ENCODE measurements at regions of chr5 and their contacts with region 1.

Region 1: DNA sequence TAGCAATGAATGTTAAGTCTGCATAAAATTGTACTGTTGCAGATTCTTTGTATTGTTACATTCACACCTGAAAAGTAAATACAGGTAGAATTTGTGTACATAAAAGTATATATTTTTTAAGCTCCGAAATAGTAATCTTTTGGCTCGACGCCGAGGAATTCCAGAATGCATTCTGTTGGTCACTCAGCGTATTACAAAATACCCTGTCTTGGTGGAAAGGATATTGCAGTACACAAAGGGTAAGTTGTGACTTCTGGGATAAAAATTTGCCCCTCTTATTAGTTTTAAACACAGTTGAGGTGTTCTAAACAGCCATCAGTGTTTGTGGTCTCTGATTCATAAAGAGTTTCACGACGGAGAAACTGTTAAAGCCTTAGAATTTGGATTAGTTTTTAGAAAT is 257.6 kb downstream of the ARHGEF28 start:
- DNase-seq: no peak
- H3K4me3 ChIP-seq: no peak overlapping the region
- H3K27ac ChIP-seq: no peak overlapping the region
- H3K4me1 ChIP-seq: no peaks in the 10 kb centered on the region
- H3K27me3 ChIP-seq: no peaks in the 10 kb centered on the region
- CTCF ChIP-seq: no peak
- POLR2A ChIP-seq: no peak

Region 2: GRCh38 chr5:73853091-73853490 is 30.6 kb before region 1 on chr5:
- intact Hi-C with region 1: no loop called
- DNase-seq: no peak
- H3K4me3 ChIP-seq: no peak overlapping the region
- H3K27ac ChIP-seq: peak overlapping the region; percentile 40
- H3K4me1 ChIP-seq: peaks cover 10% of the 10 kb centered on the region
- H3K27me3 ChIP-seq: no peaks in the 10 kb centered on the region
- CTCF ChIP-seq: no peak
- POLR2A ChIP-seq: no peak

Region 3: DNA sequence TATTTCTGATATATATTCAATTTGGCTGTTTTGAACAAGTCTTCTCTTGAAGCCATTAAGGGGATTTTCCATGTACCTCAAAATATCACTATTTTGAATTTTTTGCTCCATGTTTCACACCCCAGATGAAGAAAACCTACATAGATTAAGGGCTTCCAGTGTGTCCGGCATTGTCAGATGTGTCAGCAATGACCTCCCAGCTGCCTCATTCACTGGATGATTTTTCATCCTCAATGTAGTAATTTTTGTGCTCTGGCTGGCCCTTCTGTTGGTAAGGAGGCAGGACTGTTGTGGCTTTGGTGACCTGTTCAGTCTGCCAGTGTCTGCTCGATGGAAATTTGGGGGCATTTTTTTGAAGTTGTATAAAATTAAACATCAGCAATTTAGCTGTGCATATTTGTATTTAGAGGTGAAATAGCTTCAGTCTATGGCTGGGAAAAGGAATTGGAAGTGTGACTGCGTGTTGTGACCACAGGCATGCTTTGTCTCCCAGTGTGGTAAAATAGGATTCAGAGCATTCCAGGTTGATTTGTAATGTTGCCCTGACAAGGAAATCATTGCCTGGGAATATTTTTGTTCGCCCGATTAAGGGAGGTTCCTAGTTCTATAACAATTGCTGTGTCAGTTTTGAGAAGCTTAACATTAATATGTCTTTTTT is 54.8 kb after region 1 on chr5:
- intact Hi-C with region 1: no loop called
- DNase-seq: no peak
- H3K4me3 ChIP-seq: no peak overlapping the region
- H3K27ac ChIP-seq: no peak overlapping the region
- H3K4me1 ChIP-seq: peaks cover 6% of the 10 kb centered on the region
- H3K27me3 ChIP-seq: no peaks in the 10 kb centered on the region
- CTCF ChIP-seq: no peak
- POLR2A ChIP-seq: no peak

Region 4: DNA sequence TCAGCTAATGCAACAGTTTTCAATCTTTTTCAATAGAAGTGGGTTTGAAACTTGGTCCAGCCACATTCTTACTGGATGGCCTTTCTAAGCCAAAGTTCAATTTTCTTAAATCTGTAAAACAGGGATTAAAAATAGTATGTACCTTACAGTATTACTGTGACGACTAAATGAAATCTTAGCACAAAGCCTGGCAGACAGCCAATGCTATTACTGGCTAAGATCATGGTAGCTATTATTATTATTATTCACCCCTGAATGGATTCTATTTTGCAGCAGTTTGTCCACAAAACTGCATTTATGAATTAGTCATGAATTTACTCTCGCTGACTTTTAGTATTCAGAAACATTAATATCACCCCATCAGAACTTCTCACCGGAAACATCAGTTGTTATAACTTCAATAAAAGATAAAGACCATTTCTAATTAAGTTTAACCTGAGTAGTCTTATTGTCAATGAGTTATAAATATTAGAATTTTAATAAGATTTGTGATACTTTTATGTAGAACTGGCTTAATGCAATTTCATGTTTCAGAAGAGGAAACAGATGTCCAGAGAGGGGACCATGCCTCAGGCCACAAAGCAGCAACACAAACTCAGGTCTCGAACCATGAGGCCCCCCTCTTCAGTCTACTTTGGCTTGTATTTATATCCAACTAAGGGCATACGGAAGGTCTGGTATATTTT is 210.6 kb after region 1 on chr5:
- intact Hi-C with region 1: no loop called
- DNase-seq: no peak
- H3K4me3 ChIP-seq: no peak overlapping the region
- H3K27ac ChIP-seq: no peak overlapping the region
- H3K4me1 ChIP-seq: peaks cover 9% of the 10 kb centered on the region
- H3K27me3 ChIP-seq: no peaks in the 10 kb centered on the region
- CTCF ChIP-seq: no peak
- POLR2A ChIP-seq: no peak

Region 5: GRCh38 chr5:75067434-75067833 is 1183.8 kb after region 1 on chr5:
- intact Hi-C with region 1: loop called (anchors 5 kb)
- DNase-seq: no peak
- H3K4me3 ChIP-seq: no peak overlapping the region
- H3K27ac ChIP-seq: no peak overlapping the region
- H3K4me1 ChIP-seq: no peaks in the 10 kb centered on the region
- H3K27me3 ChIP-seq: no peaks in the 10 kb centered on the region
- CTCF ChIP-seq: no peak
- POLR2A ChIP-seq: no peak